GM12878 (cell line): ENCODE measurements at regions of chr2 and their contacts with region 1.

Region 1: DNA sequence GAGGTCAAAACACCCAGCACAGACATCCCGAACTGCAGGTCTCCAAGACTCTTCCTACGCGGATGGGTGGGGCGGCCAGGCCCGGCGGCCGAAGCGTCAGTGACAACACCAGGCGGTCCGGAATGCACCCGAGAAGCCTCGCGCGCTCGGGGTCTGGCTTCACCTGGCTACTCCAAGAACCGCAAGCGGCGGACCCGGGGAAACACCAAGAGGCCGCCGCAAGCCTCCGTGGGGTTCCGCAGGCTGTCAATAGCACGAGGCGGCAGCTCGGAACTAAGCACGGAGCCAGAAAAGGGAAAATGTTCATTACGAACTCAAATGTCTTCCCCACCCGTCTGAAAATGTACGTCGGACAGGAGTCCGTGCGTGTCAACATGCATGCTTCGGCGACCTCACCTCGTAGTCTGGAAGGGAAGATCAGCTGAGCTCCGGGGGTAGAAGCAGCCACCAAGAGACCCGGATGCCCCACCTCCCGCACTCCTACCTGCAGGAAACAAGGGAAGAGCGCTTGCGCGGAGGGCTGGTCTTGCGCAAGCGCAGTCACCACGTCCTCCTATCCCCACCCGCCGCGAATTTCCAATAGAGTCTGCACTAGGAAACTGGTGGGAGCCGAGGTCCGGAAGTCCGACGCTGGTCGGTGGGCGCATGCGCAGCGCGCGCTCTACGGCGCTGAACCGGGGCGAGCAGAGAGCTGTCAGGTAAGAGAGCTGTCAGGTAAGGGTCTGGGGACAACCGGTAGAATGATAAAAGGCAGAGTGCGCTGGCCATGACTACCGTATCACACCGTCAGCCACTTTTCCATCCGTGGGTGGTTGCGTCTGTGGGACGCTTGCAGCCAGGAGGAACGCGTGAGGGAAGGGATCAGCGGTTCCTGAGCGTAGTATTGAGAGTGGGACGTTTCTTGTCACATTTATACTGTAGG is at the starts of genes GPATCH11 and HEATR5B:
- DNase-seq: peak; percentile 95
- ATAC-seq: peak; percentile 86
- H3K4me3 ChIP-seq: peak within 1 kb of the TSS; percentile 87
- H3K27ac ChIP-seq: peak within 1 kb of the TSS; percentile 78
- H3K4me1 ChIP-seq: peaks cover 19% of the 10 kb centered on the region
- H3K27me3 ChIP-seq: no peaks in the 10 kb centered on the region
- CTCF ChIP-seq: no peak
- EP300 ChIP-seq: no peak
- POLR2A ChIP-seq: peak; percentile 86
- RAD21 ChIP-seq: no peak
- polyA plus RNA-seq, gene GPATCH11: 11.5 to 15.9 TPM
- polyA plus RNA-seq, gene HEATR5B: 4.1 to 7.7 TPM

Region 2: DNA sequence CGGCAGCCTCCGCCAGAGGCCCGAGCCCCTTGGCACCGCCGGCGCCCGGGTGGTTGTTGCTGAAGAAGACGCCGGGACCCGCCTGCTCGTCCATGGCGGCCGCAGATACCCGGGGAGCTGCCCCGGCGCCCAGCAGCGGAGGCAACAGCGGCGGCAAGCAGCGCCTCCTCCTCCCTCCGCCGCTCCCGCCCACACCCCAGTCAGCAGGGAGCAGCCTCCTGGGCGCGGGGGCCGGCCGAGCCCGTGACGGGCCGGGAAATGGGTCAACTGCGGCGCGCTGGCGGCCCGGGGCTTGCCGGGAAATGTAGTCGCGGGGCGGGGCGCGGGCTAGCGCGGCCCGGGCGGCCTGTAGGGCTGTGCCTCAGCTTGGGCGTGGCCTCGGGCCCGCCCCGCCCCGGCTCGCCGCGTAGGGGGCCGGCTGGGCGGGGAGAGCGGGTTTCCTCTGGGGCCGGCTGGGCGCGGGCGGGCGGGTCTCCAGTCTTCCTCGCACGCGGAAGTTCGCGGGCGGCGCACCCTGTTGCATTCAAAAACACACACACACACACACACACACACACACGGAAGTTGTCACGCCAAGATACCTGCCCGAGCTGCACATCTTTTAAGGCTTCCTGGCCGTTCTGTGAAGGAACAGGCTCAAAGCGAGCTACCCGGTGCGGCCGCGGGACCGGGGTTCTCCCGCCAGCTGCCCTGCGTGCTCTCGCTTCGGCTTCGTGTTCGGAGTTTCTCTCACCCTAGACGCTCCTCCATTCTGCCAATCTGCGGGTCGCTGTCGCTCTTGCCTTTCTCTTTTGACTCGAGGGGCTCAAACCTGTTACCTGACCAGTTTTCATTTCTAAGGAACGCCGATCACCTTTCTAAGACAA is 117.5 kb before region 1 on chr2 and contains the start of gene STRN:
- CTCF ChIA-PET with region 1: interaction called, 3 read pairs
- POLR2A ChIA-PET with region 1: interaction called, 6 read pairs
- RAD21 ChIA-PET with region 1: no interaction called
- SMC1A ChIA-PET with region 1: no interaction called
- in situ Hi-C with region 1: no loop called
- intact Hi-C with region 1: loop called (anchors 5 kb)
- DNase-seq: peak; percentile 69
- ATAC-seq: peak; percentile 96
- H3K4me3 ChIP-seq: peak within 1 kb of the TSS; percentile 98
- H3K27ac ChIP-seq: peak within 1 kb of the TSS; percentile 72
- H3K4me1 ChIP-seq: peaks cover 4% of the 10 kb centered on the region
- H3K27me3 ChIP-seq: no peaks in the 10 kb centered on the region
- CTCF ChIP-seq: no peak
- EP300 ChIP-seq: no peak
- POLR2A ChIP-seq: peak; percentile 88
- RAD21 ChIP-seq: no peak
- polyA plus RNA-seq, gene STRN: 1.00 to 1.4 TPM

Region 3: GRCh38 chr2:37013315-37013641 is 70.9 kb before region 1 on chr2:
- CTCF ChIA-PET with region 1: no interaction called
- POLR2A ChIA-PET with region 1: interaction called, 3 read pairs
- RAD21 ChIA-PET with region 1: interaction called, 3 read pairs
- SMC1A ChIA-PET with region 1: interaction called, 4 read pairs
- in situ Hi-C with region 1: no loop called
- intact Hi-C with region 1: loop called (anchors 2 kb)
- DNase-seq: no peak
- ATAC-seq: peak; percentile 57
- H3K4me3 ChIP-seq: no peak overlapping the region
- H3K27ac ChIP-seq: no peak overlapping the region
- H3K4me1 ChIP-seq: peaks cover 30% of the 10 kb centered on the region
- H3K27me3 ChIP-seq: no peaks in the 10 kb centered on the region
- CTCF ChIP-seq: no peak
- EP300 ChIP-seq: no peak
- POLR2A ChIP-seq: no peak
- RAD21 ChIP-seq: no peak